PC-9 (cell line): ENCODE measurements at regions of chr17 and their contacts with region 1.

Region 1: DNA sequence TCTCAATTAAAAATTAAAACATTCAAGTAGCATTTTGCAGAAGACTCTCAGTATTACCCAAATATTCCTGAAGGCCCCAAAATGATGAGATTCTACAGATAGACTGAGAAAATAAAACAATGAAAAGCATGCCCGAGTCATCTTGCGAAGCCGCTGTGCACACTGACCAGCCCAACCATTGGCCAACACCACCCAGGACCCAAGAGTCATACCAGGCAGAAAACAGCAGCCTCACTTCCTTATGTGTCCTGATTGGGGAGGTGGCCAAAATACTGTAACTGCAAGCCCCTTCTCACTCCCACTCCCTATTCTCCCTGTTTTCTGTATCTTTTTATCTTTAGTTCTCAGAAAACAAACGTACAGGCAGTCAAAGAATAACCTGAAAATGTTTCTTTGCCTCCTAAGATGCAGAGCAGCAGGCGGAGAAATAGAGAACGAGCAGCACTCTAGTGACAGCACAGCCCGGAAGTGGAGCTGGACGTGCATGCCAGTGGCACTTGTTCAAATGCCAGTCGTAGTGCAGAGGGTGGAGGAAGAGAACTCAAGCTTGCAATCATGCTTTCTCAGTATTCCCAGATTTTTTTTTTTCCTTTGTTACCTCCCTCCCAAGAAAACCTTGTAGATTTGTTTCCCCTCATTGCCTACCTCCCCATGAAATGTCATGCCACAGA is 182.3 kb upstream of the SOX9 start:
- DNase-seq: no peak
- H3K4me3 ChIP-seq: no peak overlapping the region
- H3K27ac ChIP-seq: no peak overlapping the region
- H3K4me1 ChIP-seq: peaks cover 34% of the 10 kb centered on the region
- H3K27me3 ChIP-seq: no peaks in the 10 kb centered on the region
- CTCF ChIP-seq: no peak

Region 2: DNA sequence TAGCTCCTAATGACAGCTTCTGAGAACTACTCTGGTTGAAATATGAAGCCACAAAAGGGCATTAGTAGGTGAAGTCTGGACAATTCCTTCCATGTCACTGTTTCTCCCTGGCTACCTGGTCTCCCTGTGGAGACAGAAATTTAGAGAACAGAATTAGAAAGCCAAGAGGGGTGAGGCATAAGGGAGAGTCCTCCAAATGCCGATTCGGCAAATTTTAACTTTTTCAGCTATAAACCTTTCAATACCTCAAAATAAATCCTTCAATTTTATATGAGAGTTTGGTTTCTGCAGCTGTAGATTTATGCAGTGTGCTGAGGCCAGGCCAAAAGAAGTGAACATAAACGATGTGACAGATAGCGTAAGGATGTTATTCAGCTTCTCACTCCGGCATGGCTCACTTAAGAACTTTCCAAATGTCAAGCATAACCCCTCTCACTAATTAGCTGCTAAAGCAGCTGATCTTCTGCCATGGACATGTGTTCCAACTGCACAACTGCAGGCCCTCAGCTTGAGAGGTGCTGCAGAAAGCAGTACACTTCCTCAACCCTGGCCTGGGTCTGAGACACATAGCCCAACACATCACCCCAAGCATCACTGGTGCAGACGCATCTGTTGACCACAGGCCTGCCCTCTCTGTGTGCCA is 65.5 kb before region 1 on chr17:
- CTCF ChIA-PET with region 1: no interaction called
- POLR2A ChIA-PET with region 1: interaction called, 23 read pairs
- intact Hi-C with region 1: no loop called
- DNase-seq: no peak
- H3K4me3 ChIP-seq: no peak overlapping the region
- H3K27ac ChIP-seq: no peak overlapping the region
- H3K4me1 ChIP-seq: no peaks in the 10 kb centered on the region
- H3K27me3 ChIP-seq: no peaks in the 10 kb centered on the region
- CTCF ChIP-seq: no peak

Region 3: GRCh38 chr17:71970312-71970711 is 31.8 kb after region 1 on chr17:
- CTCF ChIA-PET with region 1: no interaction called
- POLR2A ChIA-PET with region 1: no interaction called
- intact Hi-C with region 1: loop called (anchors 5 kb)
- DNase-seq: peak; percentile 45 to 89
- H3K4me3 ChIP-seq: no peak overlapping the region
- H3K27ac ChIP-seq: peak overlapping the region; percentile 73
- H3K4me1 ChIP-seq: peaks cover 23% of the 10 kb centered on the region
- H3K27me3 ChIP-seq: no peaks in the 10 kb centered on the region
- CTCF ChIP-seq: no peak